ENCODE measurements at regions of chr11 and their contacts with region 1.

Region 1: DNA sequence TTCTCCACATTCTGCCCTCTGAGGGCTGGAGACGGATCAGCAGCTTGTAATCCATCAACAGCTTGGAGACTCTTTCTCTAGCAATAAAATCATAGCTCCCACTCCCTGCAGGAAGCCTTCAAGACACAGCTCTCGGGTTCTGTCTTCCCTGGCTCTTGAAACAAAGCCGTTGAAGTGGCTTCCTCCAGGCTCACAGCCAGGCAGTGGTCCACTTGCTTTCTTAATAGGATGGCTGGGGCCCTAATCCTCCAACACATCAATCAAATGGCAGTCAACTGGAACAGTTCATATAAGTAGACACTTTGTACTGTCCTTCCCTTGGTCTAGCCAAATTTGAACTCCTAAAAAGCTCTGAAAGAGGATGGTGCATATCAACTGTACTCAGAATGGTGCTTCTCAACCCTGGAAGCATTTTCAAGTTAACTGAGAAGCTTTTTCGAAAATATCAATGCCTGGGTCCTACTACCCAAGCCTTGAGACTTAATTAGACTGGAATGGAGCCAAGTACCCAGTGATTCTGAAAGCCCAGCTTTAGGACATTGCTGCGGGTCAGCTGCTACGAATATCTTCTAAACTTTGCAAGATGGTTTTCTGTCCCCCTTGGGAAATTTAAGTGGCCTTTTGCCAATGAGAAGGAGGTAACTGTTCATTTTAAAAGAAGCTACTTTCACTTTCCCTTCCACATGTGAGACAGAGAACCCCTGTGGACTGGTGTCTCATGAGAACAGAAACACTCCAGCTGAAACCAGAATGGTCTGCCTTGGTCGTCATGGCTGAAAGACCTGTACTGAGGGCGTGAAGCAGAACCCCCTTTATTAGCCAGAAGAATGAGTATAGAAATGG is 74.7 kb downstream of the SC5D start:
- DNase-seq: peak; percentile 22
- ATAC-seq: peak; percentile 98
- H3K4me3 Mint-ChIP-seq: peak overlapping the region; percentile 74
- H3K27ac Mint-ChIP-seq: peak overlapping the region; percentile 81
- H3K4me1 Mint-ChIP-seq: peaks cover 55% of the 10 kb centered on the region
- H3K27me3 Mint-ChIP-seq: no peaks in the 10 kb centered on the region
- CTCF ChIP-seq: no peak

Region 2: GRCh38 chr11:121328967-121329679 is 38.1 kb before region 1 on chr11:
- CTCF ChIA-PET with region 1: no interaction called
- POLR2A ChIA-PET with region 1: interaction called, 8 read pairs
- intact Hi-C with region 1: loop called (anchors 2 kb)
- DNase-seq: no peak
- ATAC-seq: peak; percentile 25
- H3K4me3 Mint-ChIP-seq: no peak overlapping the region
- H3K27ac Mint-ChIP-seq: no peak overlapping the region
- H3K4me1 Mint-ChIP-seq: peaks cover 3% of the 10 kb centered on the region
- H3K27me3 Mint-ChIP-seq: peaks cover 5% of the 10 kb centered on the region
- CTCF ChIP-seq: no peak

Region 3: DNA sequence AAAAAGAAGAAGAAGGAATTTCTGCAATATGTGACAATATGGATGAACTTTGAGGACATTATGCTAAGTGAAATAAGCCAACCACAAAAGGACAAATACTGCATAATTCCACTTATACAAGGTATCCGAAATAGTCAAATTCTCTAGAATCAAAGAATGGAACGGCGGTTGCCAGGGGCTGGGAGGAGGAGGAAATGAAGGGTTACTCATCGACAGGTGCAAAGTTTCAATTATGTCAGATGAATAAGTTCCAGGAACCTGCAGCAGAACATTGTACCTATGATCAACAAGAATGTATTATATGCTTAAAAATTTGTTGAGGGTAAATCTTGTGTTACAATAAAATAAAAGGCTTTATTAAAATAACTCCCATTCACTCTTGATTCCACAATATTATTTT is 25.6 kb before region 1 on chr11:
- CTCF ChIA-PET with region 1: interaction called, 5 read pairs
- POLR2A ChIA-PET with region 1: interaction called, 6 read pairs
- intact Hi-C with region 1: loop called (anchors 2 kb)
- DNase-seq: no peak
- ATAC-seq: peak; percentile 54
- H3K4me3 Mint-ChIP-seq: peak overlapping the region; percentile 3
- H3K27ac Mint-ChIP-seq: peak overlapping the region; percentile 59
- H3K4me1 Mint-ChIP-seq: peaks cover 51% of the 10 kb centered on the region
- H3K27me3 Mint-ChIP-seq: no peaks in the 10 kb centered on the region
- CTCF ChIP-seq: no peak

Region 4: DNA sequence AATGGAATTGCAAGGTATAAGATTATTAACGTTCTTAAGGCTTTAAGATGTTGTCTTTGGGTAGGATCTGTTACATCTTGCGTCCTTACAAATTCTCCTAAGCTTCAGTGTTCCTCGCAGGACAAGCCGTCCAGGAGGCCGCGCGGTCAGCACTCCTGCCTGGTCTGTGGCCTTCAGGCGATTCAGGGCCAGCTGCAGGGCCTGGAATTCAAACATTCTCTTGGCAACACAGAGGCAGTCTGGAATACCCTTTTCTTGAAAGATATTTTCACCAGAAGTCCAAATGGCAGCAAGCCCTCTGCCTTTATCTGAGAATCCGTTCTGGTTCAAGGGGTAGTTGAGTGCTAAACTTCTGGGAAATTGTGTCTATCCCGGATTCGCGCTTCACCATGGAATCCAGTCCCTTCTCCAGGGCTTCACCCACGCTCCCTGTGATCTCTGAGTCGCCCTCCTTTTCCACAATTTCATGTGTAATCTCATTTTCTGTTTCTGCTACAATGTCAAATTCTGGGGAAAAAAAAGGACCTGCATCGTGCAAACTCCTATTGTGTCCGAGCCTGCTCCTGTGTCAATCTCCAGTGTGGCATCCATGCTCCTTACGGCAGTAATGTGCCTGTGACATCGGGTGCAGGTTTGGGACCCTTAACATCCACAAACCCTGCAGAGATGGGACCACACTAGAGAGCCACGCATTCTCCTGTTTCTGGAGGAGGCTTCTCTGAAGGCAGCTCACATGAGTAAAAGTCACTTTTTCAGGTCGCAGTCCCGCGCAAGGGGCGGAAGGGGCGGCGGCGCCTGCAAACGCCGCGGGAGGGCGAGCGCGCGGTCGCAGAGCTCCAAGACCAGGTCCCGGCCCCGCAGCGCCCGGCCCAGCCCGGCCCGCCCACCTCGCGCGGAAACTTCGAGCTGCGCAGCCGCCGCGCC is 59.5 kb after region 1 on chr11:
- CTCF ChIA-PET with region 1: interaction called, 4 read pairs
- POLR2A ChIA-PET with region 1: interaction called, 11 read pairs
- intact Hi-C with region 1: loop called (anchors 10 kb)
- DNase-seq: peak; percentile 58
- ATAC-seq: peak; percentile 43
- H3K4me3 Mint-ChIP-seq: peak overlapping the region; percentile 70
- H3K27ac Mint-ChIP-seq: peak overlapping the region; percentile 64
- H3K4me1 Mint-ChIP-seq: peaks cover 88% of the 10 kb centered on the region
- H3K27me3 Mint-ChIP-seq: peaks cover 2% of the 10 kb centered on the region
- CTCF ChIP-seq: no peak

Region 5: DNA sequence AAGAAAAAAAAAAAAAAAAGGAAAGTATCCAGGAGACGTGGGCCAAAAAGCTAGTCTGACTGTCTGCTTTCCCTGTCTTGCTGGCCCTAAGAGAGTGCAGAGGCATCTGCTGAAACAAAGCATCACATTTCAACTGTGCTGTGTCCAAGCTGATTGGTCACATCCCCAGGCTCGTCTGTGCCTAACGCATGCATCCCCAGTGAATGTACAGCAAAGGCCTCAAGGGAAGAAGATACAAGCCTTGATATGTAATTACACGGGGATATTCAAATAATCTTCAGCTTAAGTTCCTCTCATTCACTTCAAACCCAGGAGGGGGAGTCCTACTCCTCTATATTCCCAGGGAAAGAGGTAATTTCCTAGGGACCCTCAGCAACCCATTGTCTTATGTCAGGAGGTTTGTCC is 79.5 kb after region 1 on chr11:
- CTCF ChIA-PET with region 1: no interaction called
- POLR2A ChIA-PET with region 1: interaction called, 19 read pairs
- intact Hi-C with region 1: no loop called
- DNase-seq: no peak
- ATAC-seq: peak; percentile 49
- H3K4me3 Mint-ChIP-seq: peak overlapping the region; percentile 66
- H3K27ac Mint-ChIP-seq: peak overlapping the region; percentile 80
- H3K4me1 Mint-ChIP-seq: peaks cover 76% of the 10 kb centered on the region
- H3K27me3 Mint-ChIP-seq: no peaks in the 10 kb centered on the region
- CTCF ChIP-seq: no peak

Region 6: DNA sequence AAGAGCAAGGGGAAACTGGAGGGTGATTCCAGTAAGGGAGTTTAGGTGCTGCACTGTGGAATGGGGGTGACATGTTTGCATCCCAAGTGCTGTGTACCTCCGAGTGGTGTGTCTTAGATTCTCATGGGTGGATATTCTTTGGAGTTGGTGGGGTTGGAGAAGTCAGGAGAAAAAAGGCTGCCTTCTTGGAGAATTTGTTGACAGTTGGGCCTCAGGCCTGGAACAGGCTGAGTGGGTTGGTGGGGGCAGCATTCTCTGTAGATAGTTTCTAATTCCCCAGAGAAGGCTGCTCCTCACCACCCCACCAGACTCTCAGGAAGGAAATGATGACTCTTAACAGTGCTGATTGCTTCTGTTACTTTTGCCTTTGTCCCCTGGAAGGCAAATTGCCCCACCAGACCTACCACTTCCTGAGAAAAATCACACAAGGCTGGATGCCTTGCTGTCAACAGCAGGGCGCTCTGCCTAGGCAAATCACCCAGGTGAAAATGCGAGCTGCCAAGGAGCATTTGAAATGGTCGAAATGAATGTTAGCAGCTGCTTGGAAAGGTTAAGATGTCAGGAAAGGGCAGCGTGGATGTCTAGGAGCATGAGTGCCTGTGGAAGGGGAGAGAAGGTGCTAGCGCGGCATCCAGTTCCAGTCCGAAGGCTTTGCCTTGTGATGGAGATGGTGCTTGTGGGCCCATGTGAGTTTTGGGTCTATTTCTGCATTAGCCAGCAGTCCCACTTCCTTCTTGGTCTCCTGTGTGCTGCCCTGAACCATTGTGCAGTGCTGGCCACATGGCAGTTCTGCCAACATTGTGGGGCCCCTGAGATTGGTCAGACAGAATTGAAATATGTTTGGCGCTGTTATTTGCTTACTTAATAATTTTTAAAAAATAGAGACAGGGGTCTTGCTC is 115.3 kb after region 1 on chr11:
- CTCF ChIA-PET with region 1: no interaction called
- POLR2A ChIA-PET with region 1: no interaction called
- intact Hi-C with region 1: loop called (anchors 1 kb)
- DNase-seq: peak; percentile 33
- ATAC-seq: peak; percentile 90
- H3K4me3 Mint-ChIP-seq: peak overlapping the region; percentile 67
- H3K27ac Mint-ChIP-seq: peak overlapping the region; percentile 85
- H3K4me1 Mint-ChIP-seq: peaks cover 62% of the 10 kb centered on the region
- H3K27me3 Mint-ChIP-seq: no peaks in the 10 kb centered on the region
- CTCF ChIP-seq: no peak

Region 7: DNA sequence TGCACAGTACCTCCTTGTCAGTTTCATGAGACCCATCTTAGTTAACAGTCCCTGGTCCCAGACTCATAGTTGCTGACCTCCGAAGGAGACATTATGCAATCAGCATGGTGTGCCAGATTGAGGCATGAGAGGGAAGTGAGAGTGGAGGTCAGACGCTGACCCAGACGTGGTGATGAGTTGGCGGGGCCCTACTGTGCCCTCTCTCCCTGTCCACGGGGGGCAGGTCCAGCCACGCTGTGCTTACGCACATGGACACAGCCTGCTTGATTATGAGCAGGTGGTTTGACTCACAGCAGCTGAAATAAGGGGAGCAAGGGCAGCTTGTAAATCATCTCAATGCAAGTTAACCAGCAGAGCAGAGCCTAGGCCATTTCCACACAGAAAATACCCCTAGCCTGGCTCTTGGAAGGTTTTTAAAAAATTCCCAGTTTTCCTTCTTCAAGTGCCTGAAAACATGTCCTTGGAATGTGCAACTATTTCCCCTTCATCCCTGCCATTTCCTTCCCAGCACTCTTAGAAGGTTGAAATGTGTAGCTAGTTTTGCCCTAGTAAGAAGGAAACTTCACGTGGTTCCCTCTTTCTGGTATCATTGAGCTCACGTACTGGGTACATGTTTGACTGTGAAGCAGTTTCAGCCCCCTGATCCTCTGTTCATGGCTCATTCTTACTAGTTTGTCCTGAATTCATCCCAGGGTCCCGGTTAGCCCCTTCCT is 208.2 kb after region 1 on chr11:
- CTCF ChIA-PET with region 1: no interaction called
- POLR2A ChIA-PET with region 1: interaction called, 3 read pairs
- intact Hi-C with region 1: loop called (anchors 5 kb)
- DNase-seq: no peak
- ATAC-seq: peak; percentile 78
- H3K4me3 Mint-ChIP-seq: peak overlapping the region; percentile 50
- H3K27ac Mint-ChIP-seq: peak overlapping the region; percentile 87
- H3K4me1 Mint-ChIP-seq: peaks cover 42% of the 10 kb centered on the region
- H3K27me3 Mint-ChIP-seq: peaks cover 4% of the 10 kb centered on the region
- CTCF ChIP-seq: no peak